ENCODE measurements at regions of chr1 and their contacts with region 1.

Region 1: DNA sequence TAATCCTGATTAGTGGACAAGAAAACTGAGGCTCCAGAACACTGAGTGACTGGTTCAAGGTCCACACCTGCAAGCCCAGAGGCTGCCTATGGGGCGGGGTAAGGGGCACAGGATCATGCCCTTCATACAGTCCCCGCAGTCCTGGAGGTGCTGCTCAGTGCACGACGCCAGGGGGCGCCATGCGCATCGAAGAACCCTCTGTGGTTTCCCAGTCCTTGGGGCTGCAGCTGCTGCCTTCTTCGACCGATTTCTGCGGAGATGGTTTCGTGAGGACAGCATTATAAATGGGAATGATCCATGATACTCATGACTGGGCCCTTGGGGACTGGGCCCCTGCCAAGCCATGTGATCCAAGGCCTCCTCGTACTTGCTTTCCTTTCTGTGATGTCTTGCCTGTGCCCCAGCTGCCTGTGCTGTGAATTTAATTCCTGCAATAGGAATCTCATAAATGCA is 37.1 kb upstream of the ARHGEF10L start:
- DNase-seq: peak; percentile 81 to 89
- H3K4me3 ChIP-seq: no peak overlapping the region
- H3K27ac ChIP-seq: peak overlapping the region; percentile 30 to 51
- H3K4me1 ChIP-seq: no peaks in the 10 kb centered on the region
- H3K27me3 ChIP-seq: no peaks in the 10 kb centered on the region
- CTCF ChIP-seq: peak; percentile 88 to 92 (median 91)
- POLR2A ChIP-seq: no peak

Region 2: DNA sequence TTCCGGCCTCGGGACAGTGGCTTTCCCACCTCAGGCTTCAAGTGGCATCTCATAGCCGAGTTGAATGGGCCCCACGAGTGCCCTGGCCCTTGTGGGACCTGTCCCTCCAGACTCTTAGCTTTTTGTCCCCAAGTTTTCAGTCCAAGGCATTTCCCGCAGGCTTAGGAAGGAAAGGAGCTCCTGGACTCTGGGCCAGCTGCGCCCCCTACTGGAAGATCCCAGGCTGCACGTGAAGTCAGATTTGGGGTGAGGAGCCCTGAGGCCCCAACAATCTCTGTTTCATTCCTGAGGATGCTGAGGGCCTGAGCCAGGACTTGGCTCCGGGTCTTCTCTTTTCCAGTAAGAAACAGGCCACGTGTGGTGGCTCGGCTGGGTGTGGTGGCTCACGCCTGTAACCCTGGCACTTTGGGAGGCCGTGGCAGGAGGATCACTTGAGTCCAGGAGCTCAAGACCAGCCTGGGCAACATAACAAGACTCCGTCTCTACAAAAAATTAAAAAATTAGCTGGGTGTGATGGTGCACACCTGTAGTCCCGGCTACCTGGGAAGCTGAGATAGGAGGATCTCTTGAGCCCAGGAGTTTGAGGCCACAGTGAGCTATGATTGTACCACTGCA is 104.6 kb after region 1 on chr1:
- intact Hi-C with region 1: loop called (anchors 5 kb)
- DNase-seq: peak; percentile 62 to 76
- H3K4me3 ChIP-seq: no peak overlapping the region
- H3K27ac ChIP-seq: no peak overlapping the region
- H3K4me1 ChIP-seq: no peaks in the 10 kb centered on the region
- H3K27me3 ChIP-seq: no peaks in the 10 kb centered on the region
- CTCF ChIP-seq: peak; percentile 76 to 95 (median 91)
- POLR2A ChIP-seq: no peak